GM23248 (cell line): ENCODE measurements at regions of chr1 and their contacts with region 1.

Region 1: DNA sequence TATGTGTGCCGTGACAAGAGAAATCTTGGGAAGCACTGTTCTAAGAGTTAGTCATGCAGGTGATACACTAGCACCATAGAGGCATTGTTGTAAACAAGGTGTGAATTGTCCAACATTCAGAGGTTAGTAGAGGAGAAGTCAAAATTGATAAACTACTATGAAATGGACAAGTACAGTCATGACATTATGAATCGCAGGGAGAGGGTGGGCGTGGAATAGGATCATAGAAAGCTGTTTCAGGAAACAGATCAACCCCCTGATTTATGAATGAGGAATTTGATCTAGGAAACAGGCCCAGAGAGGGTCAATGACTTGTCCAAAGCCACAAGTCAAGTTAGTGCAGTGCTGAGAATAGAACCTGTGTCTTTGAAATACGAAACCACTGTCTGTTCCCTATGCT is 58.5 kb upstream of the LAX1 start:
- DNase-seq: peak; percentile 25
- H3K4me3 ChIP-seq: no peak overlapping the region
- H3K27ac ChIP-seq: no peak overlapping the region
- H3K4me1 ChIP-seq: peaks cover 4% of the 10 kb centered on the region; the same call in 1 of the 2 replicates
- H3K27me3 ChIP-seq: no peaks in the 10 kb centered on the region

Region 2: GRCh38 chr1:203497269-203497777 is 209.1 kb before region 1 on chr1:
- in situ Hi-C with region 1: loop called (anchors 5 kb)
- DNase-seq: no peak
- H3K4me3 ChIP-seq: no peak overlapping the region
- H3K27ac ChIP-seq: no peak overlapping the region
- H3K4me1 ChIP-seq: no peaks in the 10 kb centered on the region
- H3K27me3 ChIP-seq: no peaks in the 10 kb centered on the region